Dorsolateral prefrontal cortex (tissue), 120 donors: ENCODE measurements at regions of chr12 and their contacts with region 1.

Region 1: GRCh38 chr12:27243804-27244683 is at the start of gene STK38L:
- DNase-seq: peak; percentile 75 to 97 (median 92)
- H3K4me3 ChIP-seq: peak within 1 kb of the TSS; percentile 65 to 99 (median 82)
- H3K27ac ChIP-seq: peak within 1 kb of the TSS in 58 of 59 donors; percentile 0 to 94 (median 82)
- H3K27me3 ChIP-seq: no peaks in the 10 kb centered on the region
- CTCF ChIP-seq: peak in 32 of 56 donors; percentile 10 to 52 (median 25)
- total RNA-seq, gene STK38L: 22.2 to 68.1 (median 43.4) TPM

Region 2: DNA sequence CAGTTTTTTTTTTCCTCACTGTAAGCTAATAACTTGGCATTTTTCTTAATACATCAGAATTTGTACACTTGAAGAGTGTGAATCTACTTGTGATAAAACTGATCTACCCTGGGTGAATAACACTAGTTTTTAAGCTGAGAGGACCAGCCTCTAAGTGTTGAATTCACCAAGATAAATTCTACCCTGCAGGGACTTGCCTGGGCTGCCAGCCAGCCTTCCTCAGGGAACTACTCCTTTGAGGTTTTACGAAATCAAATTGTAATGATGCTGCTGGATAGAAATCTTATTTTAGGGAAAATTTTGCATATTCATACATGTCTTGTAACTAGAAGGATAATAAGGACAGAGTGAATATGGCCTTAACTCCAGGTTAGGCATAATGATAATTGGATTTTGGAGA is 219.8 kb before region 1 on chr12:
- intact Hi-C with region 1: loop called (anchors 10 kb)
- DNase-seq: no peak
- H3K4me3 ChIP-seq: peak overlapping the region in 49 of 59 donors; percentile 0 to 99 (median 87)
- H3K27ac ChIP-seq: no peak overlapping the region
- H3K27me3 ChIP-seq: no peaks in the 10 kb centered on the region
- CTCF ChIP-seq: no peak

Region 3: DNA sequence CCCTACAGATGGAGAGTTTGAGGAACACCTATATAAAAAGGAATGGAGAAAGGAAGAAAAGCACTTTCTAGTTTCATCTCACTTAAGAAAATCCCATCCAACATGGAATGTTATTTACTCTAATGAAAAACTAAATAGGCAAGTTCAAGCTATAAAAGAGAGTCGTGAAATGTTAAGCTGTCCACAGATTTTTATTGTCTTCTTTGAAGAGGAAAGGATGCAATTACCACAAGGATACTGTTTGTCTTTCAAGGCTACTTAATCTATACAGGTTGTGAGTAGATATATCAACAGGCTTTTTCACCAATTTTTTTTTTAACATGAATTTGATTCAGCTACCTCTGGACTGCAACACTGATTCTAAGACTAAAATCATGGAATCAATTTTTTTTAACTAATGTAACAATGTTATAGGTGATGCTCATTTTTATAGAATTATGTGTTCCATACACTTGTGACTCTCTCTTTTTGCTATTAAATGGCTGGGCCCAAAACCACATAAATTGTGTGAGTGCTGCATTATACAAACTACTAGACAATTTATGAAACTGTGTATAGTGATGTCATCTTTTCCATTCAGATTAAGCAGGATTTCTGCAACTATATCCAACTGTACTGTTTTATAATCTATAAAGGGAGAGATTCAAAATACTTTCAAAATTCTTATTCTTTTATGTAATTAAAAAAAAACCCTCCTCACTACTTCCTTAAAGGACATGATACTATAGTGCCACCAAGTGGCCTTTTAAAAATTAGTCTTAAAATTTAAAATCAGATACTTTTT is 61.8 kb after region 1 on chr12:
- intact Hi-C with region 1: loop called in 1 of 2 experiments (anchors 10 kb)
- DNase-seq: no peak
- H3K4me3 ChIP-seq: no peak overlapping the region
- H3K27ac ChIP-seq: peak overlapping the region in 3 of 59 donors; percentile 3 to 14 (median 12)
- H3K27me3 ChIP-seq: no peaks in the 10 kb centered on the region
- CTCF ChIP-seq: peak; percentile 43 to 89 (median 66)